ENCODE measurements at regions of chr13 and their contacts with region 1.

Region 1: DNA sequence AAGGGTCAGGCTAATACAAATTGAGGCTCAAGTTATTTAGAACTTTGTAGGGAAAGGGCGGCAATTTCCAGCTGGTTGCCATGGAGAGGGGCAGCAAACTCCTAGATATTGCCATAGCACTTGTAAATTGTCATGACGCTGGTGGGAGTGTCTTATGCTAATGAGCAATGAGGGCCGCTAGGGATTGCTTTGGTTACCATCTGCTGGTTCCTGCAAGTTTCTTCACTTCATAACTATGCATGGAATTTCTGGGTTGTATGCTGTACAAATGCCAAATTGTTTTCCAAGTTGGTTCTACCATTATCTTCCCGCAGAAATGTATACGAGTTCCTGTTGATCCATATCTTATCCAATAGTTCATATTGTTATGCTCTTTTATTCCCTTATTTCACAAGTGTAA is 1339.4 kb downstream of the EFNB2 start:
- DNase-seq: no peak
- H3K4me3 ChIP-seq: no peak overlapping the region
- H3K27ac ChIP-seq: no peak overlapping the region
- H3K4me1 ChIP-seq: no peaks in the 10 kb centered on the region
- H3K27me3 ChIP-seq: no peaks in the 10 kb centered on the region
- CTCF ChIP-seq: no peak
- EP300 ChIP-seq: no peak
- POLR2A ChIP-seq: no peak

Region 2: GRCh38 chr13:103291798-103292572 is 1904.1 kb before region 1 on chr13:
- intact Hi-C with region 1: no loop called
- DNase-seq: no peak
- H3K4me3 ChIP-seq: no peak overlapping the region
- H3K27ac ChIP-seq: no peak overlapping the region
- H3K4me1 ChIP-seq: no peaks in the 10 kb centered on the region
- H3K27me3 ChIP-seq: no peaks in the 10 kb centered on the region
- CTCF ChIP-seq: no peak
- EP300 ChIP-seq: no peak
- POLR2A ChIP-seq: no peak

Region 3: DNA sequence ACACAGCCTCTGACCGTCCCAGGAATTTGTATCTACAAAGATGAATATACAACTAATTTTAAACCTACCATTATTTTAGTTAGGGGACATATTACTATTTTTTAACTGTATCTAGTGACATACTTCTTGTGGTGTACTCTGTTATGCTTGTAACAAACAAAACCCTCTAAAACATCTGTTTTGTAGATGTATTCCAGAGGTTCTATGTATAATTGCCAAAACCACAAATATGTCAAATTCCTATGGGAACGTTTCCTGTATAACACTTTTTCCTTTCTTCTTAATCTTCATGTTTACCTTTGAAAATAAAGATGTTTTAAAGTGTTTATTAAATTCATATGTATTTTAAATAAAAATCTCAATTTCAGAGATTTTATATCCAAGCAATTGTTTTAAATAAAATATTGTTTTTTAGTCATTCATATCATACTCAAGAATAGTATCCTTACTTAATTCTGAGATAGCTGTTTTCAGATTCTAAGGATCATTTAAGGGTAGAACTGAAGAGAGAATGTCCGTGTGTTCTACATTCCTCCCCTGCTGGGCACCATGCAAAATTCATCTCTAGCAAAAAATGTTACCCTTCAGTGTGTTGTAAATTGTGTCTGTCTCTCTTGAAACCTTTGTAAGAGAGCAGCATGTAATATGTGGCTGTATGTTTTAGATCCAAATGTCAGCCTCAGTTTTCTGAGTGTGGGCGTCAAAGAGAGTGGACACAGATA is 11.7 kb after region 1 on chr13:
- intact Hi-C with region 1: loop called in 1 of 4 experiments (anchors 1 kb)
- DNase-seq: no peak
- H3K4me3 ChIP-seq: no peak overlapping the region
- H3K27ac ChIP-seq: no peak overlapping the region
- H3K4me1 ChIP-seq: no peaks in the 10 kb centered on the region
- H3K27me3 ChIP-seq: no peaks in the 10 kb centered on the region
- CTCF ChIP-seq: no peak
- EP300 ChIP-seq: no peak
- POLR2A ChIP-seq: no peak

Region 4: GRCh38 chr13:105272660-105273631 is 76.9 kb after region 1 on chr13:
- intact Hi-C with region 1: no loop called
- DNase-seq: no peak
- H3K4me3 ChIP-seq: no peak overlapping the region
- H3K27ac ChIP-seq: no peak overlapping the region
- H3K4me1 ChIP-seq: no peaks in the 10 kb centered on the region
- H3K27me3 ChIP-seq: no peaks in the 10 kb centered on the region
- CTCF ChIP-seq: no peak
- EP300 ChIP-seq: no peak
- POLR2A ChIP-seq: no peak

Measured in ovary (tissue), 10 donors.